ENCODE measurements at regions of chr3 and their contacts with region 1.

Region 1: DNA sequence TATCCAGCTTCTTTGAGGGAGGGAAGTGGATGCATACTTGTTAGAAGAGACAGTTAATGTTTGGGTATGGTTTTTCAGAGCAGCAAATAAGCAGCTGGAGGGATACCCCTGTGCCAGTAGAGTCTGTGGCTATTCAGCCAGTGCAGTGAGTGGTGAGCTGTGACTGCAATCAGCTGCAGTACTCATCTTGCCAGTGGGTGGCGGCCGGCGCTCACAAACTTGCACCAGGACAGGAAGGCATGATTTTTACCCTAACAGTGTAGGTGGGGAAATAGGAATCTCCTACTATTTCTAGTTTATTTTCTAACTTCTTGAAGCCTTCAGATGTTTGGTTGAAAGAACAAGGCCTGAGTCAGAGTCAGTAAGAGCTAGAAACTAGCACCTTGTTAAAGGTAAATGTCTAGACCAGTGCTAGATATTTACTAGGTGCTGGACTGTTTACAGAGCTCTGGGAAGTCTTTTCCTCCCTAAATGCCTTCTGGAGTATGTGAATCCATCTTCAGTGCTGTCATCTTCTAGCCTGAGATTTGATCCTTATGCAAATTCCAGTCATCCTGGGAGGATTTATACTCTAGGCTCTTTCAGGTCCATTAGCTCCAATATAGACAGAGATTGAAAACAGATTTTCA is 23.6 kb downstream of the TIMP4 start:
- DNase-seq: no peak
- H3K4me3 ChIP-seq: no peak overlapping the region
- CTCF ChIP-seq: peak; percentile 95

Region 2: DNA sequence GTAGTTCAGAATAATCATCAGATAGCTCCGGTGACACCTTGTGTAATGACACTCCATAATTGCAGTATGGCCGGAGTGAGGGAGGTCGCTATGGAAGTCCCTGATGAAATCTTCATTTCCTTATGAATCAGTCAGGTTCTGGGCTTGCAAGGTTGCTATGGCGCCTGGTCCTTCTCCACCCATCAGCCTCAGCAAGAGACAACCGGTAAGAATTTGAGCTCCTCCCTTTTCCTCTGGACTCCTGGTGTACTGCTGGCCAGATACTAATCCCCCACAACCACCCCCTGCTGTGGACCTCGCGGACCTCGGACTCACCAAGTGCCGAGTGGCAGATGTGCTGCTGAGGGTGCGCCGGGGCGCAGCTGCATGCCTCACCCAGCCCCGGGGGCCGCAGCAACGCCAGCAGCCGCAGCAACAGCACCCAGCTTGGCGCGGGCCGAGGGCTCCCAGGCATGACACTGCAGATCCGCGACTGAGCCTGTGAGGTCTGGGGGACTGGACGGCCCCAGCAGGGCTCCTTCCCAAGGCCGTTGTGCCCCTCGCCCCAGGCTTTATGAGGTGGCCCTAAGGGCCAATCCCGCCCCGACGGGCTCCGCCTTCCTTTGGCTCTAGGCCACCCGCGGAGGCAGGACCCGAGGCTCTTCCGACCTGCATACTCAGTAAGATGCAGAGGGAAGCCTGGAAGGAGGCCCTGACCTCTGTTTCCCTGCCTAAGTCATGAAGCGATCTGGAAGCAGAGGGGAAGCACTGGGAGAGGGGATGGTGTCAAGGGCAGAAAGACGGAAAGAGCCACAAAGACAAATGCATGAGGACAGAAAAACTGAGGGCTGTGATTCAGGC is 23.5 kb after region 1 on chr3 and contains the start of gene TIMP4:
- CTCF ChIA-PET with region 1: interaction called, 12 read pairs
- POLR2A ChIA-PET with region 1: no interaction called
- DNase-seq: no peak
- H3K4me3 ChIP-seq: peak within 1 kb of the TSS; percentile 37
- CTCF ChIP-seq: no peak

Region 3: DNA sequence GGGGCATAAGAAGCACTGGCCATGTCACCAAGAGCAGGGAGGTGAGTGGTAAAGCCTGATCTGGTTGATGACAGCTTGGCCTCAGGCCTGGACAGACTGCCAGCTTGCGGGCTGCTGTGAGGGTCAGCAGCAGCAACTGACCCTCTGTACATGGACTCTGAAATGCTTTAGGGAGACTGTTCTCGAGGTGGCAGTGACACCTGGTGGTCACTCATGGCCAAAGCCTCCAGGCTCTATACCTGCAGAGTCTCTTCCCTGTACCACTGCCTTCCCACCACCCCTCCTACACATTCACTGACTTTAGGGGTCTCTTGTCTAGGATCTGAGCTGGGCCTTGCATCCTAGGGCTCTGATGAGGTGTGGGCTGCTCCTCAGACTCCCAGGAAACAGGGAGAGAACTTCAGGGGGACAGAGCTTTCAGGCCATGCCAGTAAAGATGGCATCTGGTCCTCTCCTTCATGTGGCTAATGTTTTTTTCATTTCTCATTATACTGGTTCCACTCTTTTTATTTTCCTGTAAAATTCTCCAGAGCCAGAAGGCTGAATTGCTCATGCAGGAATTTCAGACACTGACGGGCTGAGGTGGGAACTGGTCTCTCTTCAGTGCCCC is 40.8 kb after region 1 on chr3:
- CTCF ChIA-PET with region 1: interaction called, 319 read pairs
- POLR2A ChIA-PET with region 1: no interaction called
- DNase-seq: no peak
- H3K4me3 ChIP-seq: no peak overlapping the region
- CTCF ChIP-seq: peak; percentile 84

Region 4: GRCh38 chr3:12187448-12188327 is 52.5 kb after region 1 on chr3:
- CTCF ChIA-PET with region 1: interaction called, 10 read pairs
- POLR2A ChIA-PET with region 1: no interaction called
- DNase-seq: no peak
- H3K4me3 ChIP-seq: no peak overlapping the region
- CTCF ChIP-seq: no peak

Region 5: GRCh38 chr3:12508291-12508700 is 373.2 kb after region 1 on chr3:
- CTCF ChIA-PET with region 1: interaction called, 11 read pairs
- POLR2A ChIA-PET with region 1: no interaction called
- DNase-seq: peak; percentile 92
- H3K4me3 ChIP-seq: peak overlapping the region; percentile 29; the same call in 1 of the 2 replicates
- CTCF ChIP-seq: no peak

Region 6: DNA sequence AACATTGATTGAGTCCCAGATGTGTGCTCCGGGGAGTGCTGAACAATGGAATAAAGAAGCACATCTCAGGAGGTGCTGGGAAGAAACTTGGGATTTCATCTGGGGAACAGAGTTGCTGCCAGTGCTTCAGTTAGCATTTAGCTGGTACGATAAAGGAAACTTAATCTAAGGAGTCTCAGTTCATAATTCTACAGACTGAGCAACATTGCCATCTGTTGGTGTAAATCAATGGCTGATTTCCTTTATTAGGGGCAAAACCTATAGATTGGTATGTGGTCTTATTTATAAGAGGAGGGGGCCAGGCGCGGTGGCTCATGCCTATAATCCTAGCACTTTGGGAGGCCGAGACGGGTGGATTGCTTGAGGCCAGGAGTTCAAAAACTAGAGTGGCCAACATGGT is 401.3 kb after region 1 on chr3:
- CTCF ChIA-PET with region 1: interaction called, 35 read pairs
- POLR2A ChIA-PET with region 1: no interaction called
- DNase-seq: no peak
- H3K4me3 ChIP-seq: no peak overlapping the region
- CTCF ChIP-seq: peak; percentile 29

Measured in AG04449 (cell line).